AG04450 (cell line): ENCODE measurements at regions of chr7 and their contacts with region 1.

Region 1: DNA sequence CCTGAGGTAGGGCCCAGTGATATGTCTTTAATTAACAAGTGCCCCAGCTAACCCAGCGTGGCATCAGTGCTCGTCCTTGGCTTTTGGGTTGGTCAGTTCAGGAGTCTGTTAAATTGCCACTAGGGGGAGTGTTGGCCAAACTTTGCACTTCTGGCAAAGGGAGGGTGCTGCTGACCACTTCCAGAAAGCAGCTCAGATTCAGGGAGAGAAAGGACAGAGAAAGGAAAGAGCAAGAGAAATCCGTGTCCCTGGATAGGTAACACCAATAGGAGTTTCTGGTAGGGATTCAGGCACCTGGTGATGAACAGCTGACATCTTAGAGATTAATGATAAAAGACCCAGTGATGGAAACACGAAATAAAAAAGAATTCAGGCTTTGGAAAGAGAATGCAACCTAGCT is 243.1 kb upstream of the AOAH start:
- DNase-seq: peak; percentile 21
- H3K4me3 ChIP-seq: no peak overlapping the region
- H3K27ac ChIP-seq: no peak overlapping the region
- H3K27me3 ChIP-seq: peaks cover 2% of the 10 kb centered on the region
- CTCF ChIP-seq: peak; percentile 86

Region 2: GRCh38 chr7:36979810-36980248 is 12.4 kb after region 1 on chr7:
- CTCF ChIA-PET with region 1: interaction called, 89 read pairs
- POLR2A ChIA-PET with region 1: no interaction called
- DNase-seq: no peak
- H3K4me3 ChIP-seq: no peak overlapping the region
- H3K27ac ChIP-seq: no peak overlapping the region
- H3K27me3 ChIP-seq: no peaks in the 10 kb centered on the region
- CTCF ChIP-seq: no peak

Region 3: GRCh38 chr7:37016064-37016878 is 48.9 kb after region 1 on chr7:
- CTCF ChIA-PET with region 1: no interaction called
- POLR2A ChIA-PET with region 1: no interaction called
- DNase-seq: no peak
- H3K4me3 ChIP-seq: no peak overlapping the region
- H3K27ac ChIP-seq: no peak overlapping the region
- H3K27me3 ChIP-seq: no peaks in the 10 kb centered on the region
- CTCF ChIP-seq: no peak

Region 4: GRCh38 chr7:37957221-37957980 is 990.0 kb after region 1 on chr7:
- CTCF ChIA-PET with region 1: no interaction called
- POLR2A ChIA-PET with region 1: no interaction called
- DNase-seq: no peak
- H3K4me3 ChIP-seq: no peak overlapping the region
- H3K27ac ChIP-seq: no peak overlapping the region
- H3K27me3 ChIP-seq: no peaks in the 10 kb centered on the region
- CTCF ChIP-seq: no peak